Activated T-helper 1 cell treated with anti-CD3 and anti-CD28 coated beads, Interleukin-12 subunit alpha, Interleukin-12 subunit beta, Interleukin-2, Interleukin-4 antibody, amounts not matched to agents 30 ng/mL and 10 ng/mL and 1 ng/mL, durations not matched to agents 14 hours and 24 hours and 36 hours (primary cell): ENCODE measurements at regions of chr5 and their contacts with region 1.

Region 1: GRCh38 chr5:140302786-140303639 is at the start of gene PFDN1:
- DNase-seq: peak; percentile 90
- H3K4me3 Mint-ChIP-seq: peak within 1 kb of the TSS; percentile 93
- H3K27ac Mint-ChIP-seq: peak within 1 kb of the TSS; percentile 93
- H3K4me1 Mint-ChIP-seq: peaks cover 38% of the 10 kb centered on the region
- H3K27me3 Mint-ChIP-seq: no peaks in the 10 kb centered on the region
- total RNA-seq, gene PFDN1: 59.5 and 60.6 TPM in 2 replicates

Region 2: DNA sequence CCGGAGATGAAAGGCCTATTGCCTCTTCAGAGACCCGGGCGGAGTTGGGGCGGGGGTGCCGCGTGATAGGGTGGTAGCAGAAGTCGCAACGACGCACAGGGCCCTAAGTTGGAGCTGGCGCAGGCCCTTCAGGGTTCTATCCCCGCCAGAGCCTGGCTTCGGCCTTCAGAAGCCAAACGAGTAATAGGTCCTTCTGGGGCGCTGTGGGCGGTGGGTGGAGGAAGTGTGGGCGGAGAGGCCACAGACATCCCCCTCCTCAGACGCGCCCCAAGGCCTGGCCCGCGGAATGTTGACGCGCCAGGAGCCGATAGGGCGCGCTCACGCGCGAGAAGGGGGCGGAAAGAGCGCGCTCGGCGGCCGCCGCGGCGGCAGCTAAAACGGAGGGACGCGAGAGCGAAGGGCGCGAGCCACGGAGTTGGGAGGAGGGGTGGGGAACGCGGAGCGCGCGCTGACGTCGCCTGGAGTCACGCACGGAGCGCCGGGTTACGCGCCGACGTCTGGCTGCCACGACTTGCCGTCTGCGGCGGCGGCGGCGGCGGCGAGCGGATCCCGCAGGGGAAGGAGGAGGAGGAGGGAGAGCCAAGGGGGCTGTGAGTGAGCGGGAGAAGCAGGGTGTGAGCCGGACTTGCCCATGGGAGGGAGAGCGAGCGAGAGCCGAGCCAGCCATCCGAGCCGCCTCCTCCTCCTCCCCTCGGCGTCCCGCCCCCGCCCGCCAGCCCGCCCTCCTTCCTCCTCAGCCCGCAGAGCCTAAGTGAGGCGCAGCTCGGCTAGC is 195.5 kb before region 1 on chr5:
- intact Hi-C with region 1: loop called (anchors 2 kb)
- DNase-seq: peak; percentile 90
- H3K4me3 Mint-ChIP-seq: peak overlapping the region; percentile 90
- H3K27ac Mint-ChIP-seq: peak overlapping the region; percentile 93
- H3K4me1 Mint-ChIP-seq: peaks cover 41% of the 10 kb centered on the region
- H3K27me3 Mint-ChIP-seq: peaks cover 60% of the 10 kb centered on the region

Region 3: DNA sequence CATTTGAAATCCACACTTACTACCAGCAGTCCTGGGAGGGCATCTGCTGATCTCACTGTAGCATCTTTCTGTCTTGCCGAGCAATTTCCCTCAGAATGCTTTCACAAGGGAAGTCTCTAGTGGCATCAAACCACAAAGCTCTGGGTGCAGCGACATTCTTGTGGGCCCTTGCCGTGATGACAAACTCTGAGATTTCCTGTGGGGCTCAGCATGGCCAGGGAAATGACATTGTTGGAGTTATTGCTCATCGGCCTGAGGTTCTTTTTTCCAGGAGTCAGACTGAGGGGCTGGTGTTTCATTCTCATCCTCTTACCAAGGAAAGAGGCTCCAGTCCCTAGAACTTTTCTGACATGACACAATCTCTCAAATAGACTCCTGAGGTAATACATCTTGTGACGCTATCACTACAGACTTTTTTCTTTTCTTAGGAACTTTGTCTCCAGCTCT is 51.5 kb before region 1 on chr5:
- intact Hi-C with region 1: loop called (anchors 1 kb)
- DNase-seq: peak; percentile 69
- H3K4me3 Mint-ChIP-seq: peak overlapping the region; percentile 66
- H3K27ac Mint-ChIP-seq: peak overlapping the region; percentile 78
- H3K4me1 Mint-ChIP-seq: peaks cover 58% of the 10 kb centered on the region
- H3K27me3 Mint-ChIP-seq: no peaks in the 10 kb centered on the region

Region 4: DNA sequence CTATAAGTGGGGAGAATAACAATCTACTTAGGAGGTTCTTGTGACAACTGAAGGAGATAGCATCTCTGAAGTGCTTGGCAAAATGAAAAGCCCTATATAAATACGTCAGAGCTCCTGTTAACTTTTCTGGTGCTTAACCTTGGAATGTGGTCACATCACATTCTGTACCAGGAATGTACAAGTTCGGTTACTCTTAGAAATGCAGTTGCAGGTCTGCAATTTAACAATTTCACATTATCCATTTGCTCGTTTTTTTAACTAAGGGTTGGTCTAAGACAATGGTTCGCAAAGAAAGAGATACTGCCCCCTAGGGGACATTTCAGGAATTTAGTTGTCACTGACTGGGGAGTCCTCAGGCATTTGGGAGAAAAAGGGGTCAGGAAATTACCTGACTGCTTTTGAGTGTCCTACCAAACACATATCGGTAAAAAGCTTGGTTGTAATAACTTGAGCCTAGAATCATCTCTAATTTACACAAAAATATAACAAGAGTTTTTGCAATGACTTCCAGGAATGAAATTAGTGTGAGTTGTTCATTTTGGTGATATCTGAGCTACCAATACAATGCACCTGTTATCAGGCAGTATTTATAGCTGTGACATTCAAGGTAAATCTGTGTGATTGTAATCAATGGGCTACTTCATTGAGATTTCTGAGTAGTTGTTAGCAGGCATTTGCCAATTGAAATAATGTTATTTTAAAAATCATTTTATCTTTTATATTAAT is 48.8 kb after region 1 on chr5:
- intact Hi-C with region 1: loop called (anchors 2 kb)
- DNase-seq: peak; percentile 67
- H3K4me3 Mint-ChIP-seq: peak overlapping the region; percentile 21
- H3K27ac Mint-ChIP-seq: no peak overlapping the region
- H3K4me1 Mint-ChIP-seq: peaks cover 49% of the 10 kb centered on the region
- H3K27me3 Mint-ChIP-seq: peaks cover 5% of the 10 kb centered on the region

Region 5: DNA sequence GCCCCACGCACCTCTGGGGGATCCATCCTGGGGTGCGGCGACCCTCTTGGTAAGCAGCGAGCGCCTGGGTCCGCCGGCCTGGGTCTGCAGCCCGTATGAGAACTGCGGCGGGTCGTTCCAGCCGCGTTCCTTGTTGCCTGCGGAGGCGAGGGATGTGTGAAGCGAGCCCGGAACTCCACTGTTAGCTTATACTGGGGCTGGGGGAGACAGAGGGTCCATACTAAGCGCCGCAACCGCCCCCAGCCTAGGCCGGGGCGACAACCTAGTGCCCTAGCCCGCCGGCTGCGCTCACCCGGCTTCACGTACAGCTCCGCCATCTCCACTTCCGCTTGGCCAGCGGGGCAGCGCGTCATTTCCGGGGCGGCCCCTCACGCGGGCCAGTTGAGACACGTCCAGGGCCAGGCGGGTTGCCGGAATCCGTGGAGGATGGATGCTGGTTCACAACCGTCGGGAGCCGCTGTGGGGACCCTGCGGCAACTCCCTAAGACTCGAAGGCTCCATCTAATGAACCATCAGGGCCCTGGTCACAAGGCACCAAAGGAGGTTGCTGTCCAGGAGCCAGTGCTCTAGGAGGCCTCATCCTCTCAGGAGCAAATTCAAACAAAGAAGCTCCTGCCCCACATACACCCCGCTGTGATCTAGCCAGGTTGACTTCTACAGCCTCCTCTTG is 254.3 kb after region 1 on chr5 and contains the start of gene SRA1:
- intact Hi-C with region 1: loop called (anchors 2 kb)
- DNase-seq: peak; percentile 90
- H3K4me3 Mint-ChIP-seq: peak within 1 kb of the TSS; percentile 88
- H3K27ac Mint-ChIP-seq: peak within 1 kb of the TSS; percentile 89
- H3K4me1 Mint-ChIP-seq: peaks cover 47% of the 10 kb centered on the region
- H3K27me3 Mint-ChIP-seq: no peaks in the 10 kb centered on the region
- total RNA-seq, gene SRA1: 55.6 and 59.2 TPM in 2 replicates

Region 6: DNA sequence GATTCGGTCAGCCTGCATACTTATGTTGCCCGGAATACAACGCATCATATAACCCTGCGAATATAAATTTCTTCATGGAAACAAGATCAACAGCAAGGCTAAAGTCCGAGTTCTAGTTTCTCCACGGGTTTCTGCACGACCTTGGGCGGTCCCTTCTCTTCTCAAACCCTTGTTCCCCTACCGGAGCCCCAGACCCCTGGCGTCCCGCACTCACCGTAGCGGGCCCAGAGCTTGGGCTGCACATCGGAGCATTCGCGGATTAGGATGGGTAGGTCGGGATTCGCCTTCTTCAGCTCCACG is 344.0 kb after region 1 on chr5:
- intact Hi-C with region 1: loop called (anchors 2 kb)
- DNase-seq: no peak
- H3K4me3 Mint-ChIP-seq: peak overlapping the region; percentile 99
- H3K27ac Mint-ChIP-seq: peak overlapping the region; percentile 67
- H3K4me1 Mint-ChIP-seq: peaks cover 38% of the 10 kb centered on the region
- H3K27me3 Mint-ChIP-seq: no peaks in the 10 kb centered on the region